OCI-LY7 (cell line): ENCODE measurements at regions of chr6 and their contacts with region 1.

Region 1: GRCh38 chr6:57089687-57090460 is at the start of gene ZNF451:
- DNase-seq: peak; percentile 95
- H3K4me3 ChIP-seq: peak within 1 kb of the TSS; percentile 71
- H3K27ac ChIP-seq: peak within 1 kb of the TSS; percentile 62
- H3K4me1 ChIP-seq: peaks cover 33% of the 10 kb centered on the region
- CTCF ChIP-seq: no peak
- total RNA-seq, gene ZNF451: 35.1 and 50.0 TPM in 2 replicates

Region 2: DNA sequence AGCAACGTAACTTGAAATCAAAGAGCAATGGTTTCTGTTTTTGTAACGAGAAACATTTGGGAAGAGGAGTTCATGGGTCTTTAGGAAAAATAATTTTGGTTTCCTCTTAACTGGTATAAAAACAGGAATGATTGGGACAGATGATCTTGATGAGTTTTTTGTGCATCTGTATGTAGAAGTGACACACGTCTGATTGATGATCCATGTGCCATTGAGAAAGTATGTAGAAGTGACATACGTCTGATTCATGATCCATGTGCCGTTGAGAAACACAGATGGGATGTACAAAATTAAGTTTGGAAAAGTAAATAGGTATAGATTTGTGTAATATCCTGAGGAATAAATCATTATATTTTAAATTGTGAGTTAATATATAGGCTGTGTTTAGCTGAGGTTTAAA is 41.3 kb before region 1 on chr6:
- CTCF ChIA-PET with region 1: no interaction called
- POLR2A ChIA-PET with region 1: interaction called, 4 read pairs
- intact Hi-C with region 1: loop called (anchors 5 kb)
- DNase-seq: no peak
- H3K4me3 ChIP-seq: peak overlapping the region; percentile 64
- H3K27ac ChIP-seq: no peak overlapping the region
- H3K4me1 ChIP-seq: peaks cover 24% of the 10 kb centered on the region
- CTCF ChIP-seq: no peak

Region 3: GRCh38 chr6:57108691-57109090 is 18.8 kb after region 1 on chr6:
- CTCF ChIA-PET with region 1: no interaction called
- POLR2A ChIA-PET with region 1: interaction called, 13 read pairs
- intact Hi-C with region 1: no loop called
- DNase-seq: peak; percentile 70
- H3K4me3 ChIP-seq: no peak overlapping the region
- H3K27ac ChIP-seq: peak overlapping the region; percentile 31
- H3K4me1 ChIP-seq: peaks cover 19% of the 10 kb centered on the region
- CTCF ChIP-seq: no peak

Region 4: GRCh38 chr6:57123111-57123510 is 33.2 kb after region 1 on chr6:
- CTCF ChIA-PET with region 1: no interaction called
- POLR2A ChIA-PET with region 1: no interaction called
- intact Hi-C with region 1: no loop called
- DNase-seq: no peak
- H3K4me3 ChIP-seq: no peak overlapping the region
- H3K27ac ChIP-seq: no peak overlapping the region
- H3K4me1 ChIP-seq: no peaks in the 10 kb centered on the region
- CTCF ChIP-seq: no peak